A549 (cell line): ENCODE measurements at regions of chr19 and their contacts with region 1.

Region 1: GRCh38 chr19:55605207-55605636 is 225 bp upstream of the ZNF865 start:
- DNase-seq: peak; percentile 93 to 99
- ATAC-seq: peak; percentile 72 to 85
- H3K4me3 ChIP-seq: peak overlapping the region; percentile 82
- H3K27ac ChIP-seq: peak overlapping the region; percentile 94 to 95
- H3K4me1 ChIP-seq: peaks cover 23% of the 10 kb centered on the region
- CTCF ChIP-seq: no peak
- EP300 ChIP-seq: no peak
- POLR2A ChIP-seq: no peak
- RAD21 ChIP-seq: no peak

Region 2: DNA sequence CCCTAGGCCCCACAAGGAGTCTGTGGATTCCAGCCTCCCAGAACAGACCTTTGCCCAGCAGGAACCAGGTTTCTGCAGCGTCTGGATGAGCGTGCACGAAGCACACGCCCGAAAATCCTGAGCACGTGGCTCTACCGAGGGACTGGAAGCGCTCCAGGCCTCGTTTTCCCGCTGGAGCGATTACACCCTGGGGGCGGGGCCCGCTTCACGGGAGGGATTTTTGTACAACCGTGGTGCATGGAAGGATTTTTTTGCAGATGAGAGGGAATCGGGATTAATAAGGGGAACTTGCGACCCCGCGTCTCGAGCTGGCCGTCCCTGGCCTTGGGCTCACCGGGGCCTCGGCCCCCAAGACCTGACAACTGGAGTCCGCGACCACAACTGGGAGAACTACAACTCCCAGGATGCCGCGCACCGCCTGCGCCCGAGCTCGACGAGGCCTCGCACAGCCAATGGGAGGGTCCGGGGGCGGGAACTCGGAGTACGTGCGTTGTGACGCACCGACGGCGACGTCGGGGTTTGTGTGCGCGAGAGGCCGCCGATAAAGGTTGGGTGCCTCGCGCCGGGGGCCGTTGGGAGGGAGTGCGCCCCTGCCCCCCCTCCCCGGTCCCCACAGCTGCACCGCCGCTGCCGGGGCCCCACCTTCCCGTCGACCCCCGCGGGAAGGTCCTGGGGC is 129.0 kb before region 1 on chr19 and contains the start of gene ZNF628:
- CTCF ChIA-PET with region 1: interaction called, 12 read pairs
- POLR2A ChIA-PET with region 1: interaction called, 13 read pairs
- DNase-seq: peak; percentile 99 to 100
- ATAC-seq: peak; percentile 94
- H3K4me3 ChIP-seq: peak within 1 kb of the TSS; percentile 56
- H3K27ac ChIP-seq: peak within 1 kb of the TSS; percentile 84 to 92
- H3K4me1 ChIP-seq: peaks cover 26% of the 10 kb centered on the region
- CTCF ChIP-seq: no peak
- EP300 ChIP-seq: no peak
- POLR2A ChIP-seq: peak; percentile 26; the same call in 1 of the 2 replicates
- RAD21 ChIP-seq: no peak
- polyA plus RNA-seq, gene ZNF628: 0.32 and 0.48 TPM in 2 replicates

Region 3: GRCh38 chr19:55516878-55517620 is 88.2 kb before region 1 on chr19:
- CTCF ChIA-PET with region 1: interaction called, 348 read pairs
- POLR2A ChIA-PET with region 1: interaction called, 13 read pairs
- DNase-seq: peak; percentile 97 to 100
- ATAC-seq: peak; percentile 90 to 95
- H3K4me3 ChIP-seq: peak overlapping the region; percentile 35
- H3K27ac ChIP-seq: peak overlapping the region; percentile 78 to 88
- H3K4me1 ChIP-seq: peaks cover 21% of the 10 kb centered on the region
- CTCF ChIP-seq: peak; percentile 97
- EP300 ChIP-seq: no peak
- POLR2A ChIP-seq: peak; percentile 27; the same call in 1 of the 2 replicates
- RAD21 ChIP-seq: peak; percentile 100

Region 4: DNA sequence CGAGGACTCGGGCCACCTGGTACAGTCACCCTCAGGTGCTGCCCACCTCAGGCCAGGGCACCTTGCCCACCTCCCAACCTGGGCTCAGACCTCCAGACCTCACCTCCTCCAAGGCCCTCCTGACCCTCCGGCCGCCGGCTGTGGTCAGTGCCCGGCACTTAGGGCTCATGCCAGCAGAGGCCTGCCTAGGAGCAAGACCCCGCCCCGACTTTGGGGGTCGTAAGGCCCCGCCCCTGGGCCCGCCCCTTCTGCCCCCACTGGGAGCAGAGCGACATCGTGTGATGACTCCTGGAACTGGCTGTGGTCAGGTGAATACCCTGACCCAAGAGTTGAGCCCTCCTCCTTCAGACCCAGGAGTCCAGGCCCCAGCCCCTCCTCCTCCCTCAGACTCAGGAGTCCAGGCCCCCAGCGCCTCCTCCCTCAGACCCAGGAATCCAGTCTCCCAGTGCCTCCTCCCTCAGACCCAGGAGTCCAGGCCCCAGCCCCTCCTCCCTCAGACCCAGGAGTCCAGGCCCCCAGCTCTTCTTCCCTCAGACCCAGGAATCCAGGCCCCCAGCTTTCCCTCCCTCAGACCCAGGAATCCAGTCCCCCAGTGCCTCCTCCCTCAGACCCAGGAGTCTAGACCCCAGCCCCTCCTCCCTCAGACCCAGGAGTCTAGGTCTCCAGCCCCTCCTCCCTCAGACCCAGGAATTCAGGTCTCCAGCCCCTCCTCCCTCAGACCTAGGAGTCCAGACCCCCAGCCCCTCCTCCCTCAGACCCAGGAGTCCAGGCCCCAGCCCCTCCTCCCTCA is 68.1 kb before region 1 on chr19 and contains the start of gene SBK2:
- CTCF ChIA-PET with region 1: interaction called, 13 read pairs
- POLR2A ChIA-PET with region 1: no interaction called
- DNase-seq: peak in 1 of 2 experiments; percentile 64
- ATAC-seq: peak in 1 of 2 experiments; percentile 73; a peak in 3 of 6 replicates
- H3K4me3 ChIP-seq: no peak within 1 kb of the TSS
- H3K27ac ChIP-seq: peak within 1 kb of the TSS; percentile 68 to 80
- H3K4me1 ChIP-seq: peaks cover 30% of the 10 kb centered on the region
- CTCF ChIP-seq: peak; percentile 41
- EP300 ChIP-seq: no peak
- POLR2A ChIP-seq: no peak
- RAD21 ChIP-seq: peak; percentile 69 to 72
- polyA plus RNA-seq, gene SBK2: 0.65 and 0.89 TPM in 2 replicates

Region 5: DNA sequence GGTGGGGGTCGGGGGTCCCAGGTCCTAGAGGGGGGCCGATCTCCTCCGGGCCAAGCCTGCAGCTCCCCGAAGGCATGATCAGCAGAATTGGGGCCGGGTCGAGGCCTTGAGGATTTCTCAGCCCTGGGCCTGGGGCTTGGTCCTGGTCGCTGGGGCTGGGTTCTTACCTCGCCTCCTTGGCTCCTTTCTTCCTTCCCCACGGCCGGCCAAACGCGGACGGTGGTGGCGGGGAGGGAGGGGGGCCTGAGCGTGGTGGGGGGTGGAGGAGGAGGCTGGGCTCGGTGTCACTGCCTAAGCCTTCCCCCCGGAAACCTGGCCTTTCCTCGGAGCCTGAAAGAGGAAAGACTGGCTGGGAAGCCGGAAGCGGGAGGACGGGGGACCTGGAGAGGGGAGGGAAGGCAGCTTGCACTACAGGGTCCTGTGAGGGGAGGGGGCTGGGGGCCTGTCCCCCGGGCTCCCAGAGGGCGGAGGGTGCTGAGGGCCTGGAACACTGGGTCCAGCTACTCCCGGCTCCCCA is 24.5 kb before region 1 on chr19 and contains the start of gene ZNF579:
- CTCF ChIA-PET with region 1: interaction called, 20 read pairs
- POLR2A ChIA-PET with region 1: interaction called, 13 read pairs
- DNase-seq: peak; percentile 89 to 96
- ATAC-seq: peak; percentile 79 to 81
- H3K4me3 ChIP-seq: peak within 1 kb of the TSS; percentile 96
- H3K27ac ChIP-seq: peak within 1 kb of the TSS; percentile 99 to 100
- H3K4me1 ChIP-seq: peaks cover 26% of the 10 kb centered on the region
- CTCF ChIP-seq: no peak
- EP300 ChIP-seq: no peak; a peak in 1 of 5 replicates
- POLR2A ChIP-seq: peak; percentile 48
- RAD21 ChIP-seq: peak; percentile 30 to 47; a peak in 2 of 5 replicates
- polyA plus RNA-seq, gene ZNF579: 4.2 and 6.5 TPM in 2 replicates

Region 6: GRCh38 chr19:55624109-55625003 is 19.1 kb after region 1 on chr19 and contains the start of gene ZNF784:
- CTCF ChIA-PET with region 1: interaction called, 148 read pairs
- POLR2A ChIA-PET with region 1: interaction called, 33 read pairs
- DNase-seq: peak; percentile 89 to 96
- ATAC-seq: peak; percentile 74 to 82
- H3K4me3 ChIP-seq: peak within 1 kb of the TSS; percentile 48
- H3K27ac ChIP-seq: peak within 1 kb of the TSS; percentile 89 to 93
- H3K4me1 ChIP-seq: 0 out of 3 replicates have a peak, but pooled peaks cover 7% of the 10 kb centered on the region
- CTCF ChIP-seq: no peak
- EP300 ChIP-seq: no peak
- POLR2A ChIP-seq: peak; percentile 80
- RAD21 ChIP-seq: no peak
- polyA plus RNA-seq, gene ZNF784: 3.5 and 4.1 TPM in 2 replicates

Region 7: GRCh38 chr19:55902080-55902751 is 297.0 kb after region 1 on chr19:
- CTCF ChIA-PET with region 1: no interaction called
- POLR2A ChIA-PET with region 1: no interaction called
- DNase-seq: no peak
- ATAC-seq: peak in 1 of 2 experiments; percentile 23; a peak in 1 of 6 replicates
- H3K4me3 ChIP-seq: no peak overlapping the region
- H3K27ac ChIP-seq: no peak overlapping the region
- H3K4me1 ChIP-seq: no peaks in the 10 kb centered on the region
- CTCF ChIP-seq: no peak
- EP300 ChIP-seq: no peak
- POLR2A ChIP-seq: no peak
- RAD21 ChIP-seq: no peak